Naive thymus-derived CD4-positive, alpha-beta T cell (primary cell): ENCODE measurements at regions of chr17 and their contacts with region 1.

Region 1: DNA sequence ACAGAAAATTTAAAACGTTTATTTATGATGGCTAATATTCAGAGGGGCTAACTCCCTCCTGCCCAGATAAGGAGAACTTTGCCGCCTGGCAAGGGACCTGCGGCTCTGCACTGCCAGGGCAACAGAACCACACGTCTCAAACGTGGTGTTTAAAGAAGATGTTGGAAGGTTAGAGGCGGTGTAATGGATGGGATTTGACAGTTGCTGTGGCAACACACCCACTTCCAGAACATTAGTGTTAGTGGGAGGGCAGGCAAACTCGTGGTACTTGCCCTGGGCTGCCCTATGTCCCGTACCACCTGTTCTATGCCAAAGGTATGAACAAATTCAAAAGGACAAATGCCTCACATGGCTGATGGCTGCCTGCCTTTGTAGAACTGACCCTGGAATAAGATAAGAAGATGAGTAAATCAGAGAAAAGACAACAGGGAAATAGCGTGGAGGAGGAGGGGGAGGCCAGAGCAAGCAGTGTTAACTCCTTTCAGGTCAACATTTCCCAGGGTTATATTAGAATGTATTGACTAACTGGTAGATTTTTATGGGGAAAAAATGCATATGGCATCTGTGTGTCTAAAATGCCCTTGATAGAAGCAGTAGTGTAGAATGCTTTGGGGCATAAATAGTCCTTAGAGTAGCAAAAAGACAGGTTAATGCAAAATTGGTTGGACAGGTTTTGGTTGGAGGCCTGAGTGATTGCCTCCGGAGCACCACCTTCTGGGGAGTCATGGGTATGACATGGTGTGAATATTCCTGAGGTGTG is 30.8 kb downstream of the HLF start:
- DNase-seq: peak; percentile 9 to 60 (median 50)
- ATAC-seq: peak; percentile 86
- H3K4me3 ChIP-seq: no peak overlapping the region
- H3K4me3 Mint-ChIP-seq: no peak overlapping the region
- H3K27ac ChIP-seq: no peak overlapping the region
- H3K27ac Mint-ChIP-seq: no peak overlapping the region
- H3K4me1 ChIP-seq: no peaks in the 10 kb centered on the region
- H3K4me1 Mint-ChIP-seq: peaks cover 0 to 6% (median 0%) of the 10 kb centered on the region in 7 donors
- H3K27me3 ChIP-seq: no peaks in the 10 kb centered on the region
- H3K27me3 Mint-ChIP-seq: peaks cover 0 to 21% (median 9%) of the 10 kb centered on the region in 5 donors

Region 2: GRCh38 chr17:55053855-55054254 is 241.7 kb before region 1 on chr17:
- CTCF ChIA-PET with region 1: no interaction called
- POLR2A ChIA-PET with region 1: no interaction called
- intact Hi-C with region 1: loop called (anchors 2 to 5 kb)
- DNase-seq: no peak
- ATAC-seq: no peak
- H3K4me3 ChIP-seq: no peak overlapping the region
- H3K4me3 Mint-ChIP-seq: no peak overlapping the region
- H3K27ac ChIP-seq: no peak overlapping the region
- H3K27ac Mint-ChIP-seq: no peak overlapping the region
- H3K4me1 ChIP-seq: no peaks in the 10 kb centered on the region
- H3K4me1 Mint-ChIP-seq: no peaks in the 10 kb centered on the region
- H3K27me3 ChIP-seq: no peaks in the 10 kb centered on the region
- H3K27me3 Mint-ChIP-seq: no peaks in the 10 kb centered on the region

Region 3: DNA sequence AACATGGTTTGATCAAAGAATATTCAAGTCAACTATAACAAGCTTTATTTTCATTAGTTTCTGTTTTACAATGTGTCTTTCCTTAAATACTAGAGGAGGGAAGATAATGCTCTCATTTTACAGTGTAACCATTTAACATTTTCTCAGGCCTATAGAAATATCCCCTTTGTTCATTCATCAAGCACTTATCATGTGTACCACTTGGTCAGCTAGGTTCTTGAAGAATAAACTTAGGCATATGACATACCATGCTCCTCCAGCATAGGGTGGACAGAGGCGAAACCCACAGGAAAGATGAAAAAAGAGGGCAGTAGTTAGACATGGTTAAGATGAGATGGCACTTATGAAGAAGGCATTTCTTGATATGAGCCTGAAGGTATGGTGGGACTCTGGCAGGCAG is 64.9 kb before region 1 on chr17:
- CTCF ChIA-PET with region 1: no interaction called
- POLR2A ChIA-PET with region 1: no interaction called
- intact Hi-C with region 1: loop called in 1 of 2 experiments (anchors 1 kb)
- DNase-seq: no peak
- ATAC-seq: no peak
- H3K4me3 ChIP-seq: no peak overlapping the region
- H3K4me3 Mint-ChIP-seq: no peak overlapping the region
- H3K27ac ChIP-seq: no peak overlapping the region
- H3K27ac Mint-ChIP-seq: no peak overlapping the region
- H3K4me1 ChIP-seq: no peaks in the 10 kb centered on the region
- H3K4me1 Mint-ChIP-seq: no peaks in the 10 kb centered on the region
- H3K27me3 ChIP-seq: no peaks in the 10 kb centered on the region
- H3K27me3 Mint-ChIP-seq: peaks cover 0 to 22% (median 17%) of the 10 kb centered on the region in 5 donors

Region 4: GRCh38 chr17:55238179-55238930 is 57.2 kb before region 1 on chr17:
- CTCF ChIA-PET with region 1: interaction called, 3 read pairs
- POLR2A ChIA-PET with region 1: no interaction called
- intact Hi-C with region 1: loop called in 1 of 2 experiments (anchors 2 kb)
- DNase-seq: peak; percentile 60 to 81 (median 75)
- ATAC-seq: peak; percentile 92
- H3K4me3 ChIP-seq: peak overlapping the region; percentile 65
- H3K4me3 Mint-ChIP-seq: peak overlapping the region; percentile 84 to 94 (median 86)
- H3K27ac ChIP-seq: peak overlapping the region; percentile 14
- H3K27ac Mint-ChIP-seq: peak overlapping the region in 4 of 9 donors; percentile 16 to 76 (median 56)
- H3K4me1 ChIP-seq: peaks cover 6 to 19% of the 10 kb centered on the region in 2 donors
- H3K4me1 Mint-ChIP-seq: peaks cover 9 to 23% (median 19%) of the 10 kb centered on the region in 7 donors
- H3K27me3 ChIP-seq: no peaks in the 10 kb centered on the region
- H3K27me3 Mint-ChIP-seq: peaks cover 12 to 46% (median 21%) of the 10 kb centered on the region in 5 donors